AG04449 (cell line): ENCODE measurements at regions of chr5 and their contacts with region 1.

Region 1: DNA sequence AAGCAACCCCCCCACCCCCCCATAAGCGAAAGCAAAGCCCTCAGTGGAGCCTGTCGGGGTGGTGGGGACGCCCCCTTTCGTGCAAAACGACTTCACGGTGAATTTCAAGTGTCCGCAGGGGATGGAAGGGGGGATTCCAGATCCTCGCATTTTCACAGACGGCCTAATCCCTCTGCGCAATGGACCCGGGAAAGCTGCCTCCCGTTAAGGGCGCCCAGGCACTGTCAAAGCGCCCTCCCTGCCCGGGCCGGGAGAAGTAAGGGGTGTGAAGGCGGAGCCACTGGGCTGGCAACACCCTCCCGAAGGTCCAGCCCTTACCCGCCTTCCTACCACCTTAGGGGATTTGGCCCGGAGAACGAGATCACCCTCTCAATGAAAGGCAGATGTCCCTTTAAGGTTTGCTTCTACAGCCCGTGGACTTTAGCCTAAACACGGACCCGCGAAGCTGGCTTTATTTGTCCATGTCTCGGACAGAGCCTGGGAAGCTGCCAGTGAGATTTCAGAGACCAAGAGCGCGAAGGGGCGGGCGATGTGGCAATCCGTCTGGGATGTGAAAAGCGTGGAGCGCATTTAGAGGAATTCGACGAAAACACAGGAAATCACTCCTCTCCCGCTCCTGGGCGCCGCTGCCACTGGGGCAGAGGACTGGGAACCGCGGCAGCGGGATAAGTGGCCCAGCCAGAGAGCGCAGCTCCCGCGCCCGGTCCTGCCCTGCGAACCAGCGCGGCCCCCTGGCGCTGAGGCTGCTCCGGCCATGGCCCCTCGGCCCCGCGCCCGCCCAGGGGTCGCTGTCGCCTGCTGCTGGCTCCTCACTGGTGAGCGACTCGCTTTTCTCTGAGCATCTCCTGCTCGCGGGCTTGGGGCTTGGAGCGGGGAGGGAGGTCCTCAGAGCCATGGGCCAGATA is at the starts of genes ITGA1 and PELO:
- DNase-seq: no peak
- H3K4me3 ChIP-seq: peak within 1 kb of the TSS; percentile 77
- CTCF ChIP-seq: peak; percentile 57

Region 2: GRCh38 chr5:52638732-52639131 is 149.1 kb before region 1 on chr5:
- CTCF ChIA-PET with region 1: no interaction called
- POLR2A ChIA-PET with region 1: no interaction called
- DNase-seq: no peak
- H3K4me3 ChIP-seq: no peak overlapping the region
- CTCF ChIP-seq: no peak

Region 3: DNA sequence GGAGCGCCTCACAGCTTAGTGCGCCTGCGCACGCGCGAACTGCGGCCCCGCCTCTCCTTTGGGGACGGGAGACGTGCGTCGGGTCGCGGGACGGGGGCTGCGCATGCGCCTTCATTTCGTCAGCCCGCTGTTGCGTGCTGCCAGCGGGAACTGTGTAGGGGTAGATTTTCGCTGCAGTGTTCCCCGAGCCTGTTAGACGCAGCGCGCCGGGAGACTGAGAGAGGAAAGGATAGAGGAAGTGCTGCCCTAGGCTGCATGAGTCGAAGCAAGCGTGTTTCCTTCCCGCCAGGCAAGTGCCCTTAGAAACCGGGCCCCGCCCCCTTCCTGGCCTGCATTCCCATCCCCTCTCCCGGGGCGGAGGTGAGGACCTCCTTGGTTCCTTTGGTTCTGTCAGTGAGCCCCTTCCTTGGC is 12.1 kb after region 1 on chr5:
- CTCF ChIA-PET with region 1: interaction called, 13 read pairs
- POLR2A ChIA-PET with region 1: interaction called, 11 read pairs
- DNase-seq: no peak
- H3K4me3 ChIP-seq: peak overlapping the region; percentile 76
- CTCF ChIP-seq: no peak